Activated naive CD4-positive, alpha-beta T cell treated with anti-CD3 and anti-CD28 coated beads for 36 hours (primary cell): ENCODE measurements at regions of chr3 and their contacts with region 1.

Region 1: GRCh38 chr3:141441381-141442364 is 45.2 kb upstream of the RASA2 start:
- DNase-seq: peak; percentile 91
- H3K4me3 Mint-ChIP-seq: no peak overlapping the region
- H3K27ac Mint-ChIP-seq: peak overlapping the region; percentile 73
- H3K4me1 Mint-ChIP-seq: peaks cover 23% of the 10 kb centered on the region
- H3K27me3 Mint-ChIP-seq: no peaks in the 10 kb centered on the region

Region 2: GRCh38 chr3:140972833-140973232 is 468.8 kb before region 1 on chr3:
- CTCF ChIA-PET with region 1: no interaction called
- intact Hi-C with region 1: no loop called
- DNase-seq: no peak
- H3K4me3 Mint-ChIP-seq: no peak overlapping the region
- H3K27ac Mint-ChIP-seq: no peak overlapping the region
- H3K4me1 Mint-ChIP-seq: peaks cover 4% of the 10 kb centered on the region
- H3K27me3 Mint-ChIP-seq: no peaks in the 10 kb centered on the region

Region 3: GRCh38 chr3:141303481-141304223 is 138.0 kb before region 1 on chr3:
- CTCF ChIA-PET with region 1: interaction called, 30 read pairs
- intact Hi-C with region 1: loop called (anchors 1 kb)
- DNase-seq: peak; percentile 85
- H3K4me3 Mint-ChIP-seq: no peak overlapping the region
- H3K27ac Mint-ChIP-seq: no peak overlapping the region
- H3K4me1 Mint-ChIP-seq: peaks cover 55% of the 10 kb centered on the region
- H3K27me3 Mint-ChIP-seq: no peaks in the 10 kb centered on the region

Region 4: GRCh38 chr3:141370065-141370533 is 71.6 kb before region 1 on chr3:
- CTCF ChIA-PET with region 1: interaction called, 16 read pairs
- intact Hi-C with region 1: loop called (anchors 1 kb)
- DNase-seq: peak; percentile 70
- H3K4me3 Mint-ChIP-seq: no peak overlapping the region
- H3K27ac Mint-ChIP-seq: no peak overlapping the region
- H3K4me1 Mint-ChIP-seq: peaks cover 21% of the 10 kb centered on the region
- H3K27me3 Mint-ChIP-seq: no peaks in the 10 kb centered on the region

Region 5: GRCh38 chr3:141402476-141403171 is 39.0 kb before region 1 on chr3:
- CTCF ChIA-PET with region 1: interaction called, 5 read pairs
- intact Hi-C with region 1: loop called (anchors 1 kb)
- DNase-seq: peak; percentile 45
- H3K4me3 Mint-ChIP-seq: peak overlapping the region; percentile 86
- H3K27ac Mint-ChIP-seq: peak overlapping the region; percentile 84
- H3K4me1 Mint-ChIP-seq: peaks cover 48% of the 10 kb centered on the region
- H3K27me3 Mint-ChIP-seq: no peaks in the 10 kb centered on the region